Pancreas (tissue), 10 donors: ENCODE measurements at regions of chr19 and their contacts with region 1.

Region 1: DNA sequence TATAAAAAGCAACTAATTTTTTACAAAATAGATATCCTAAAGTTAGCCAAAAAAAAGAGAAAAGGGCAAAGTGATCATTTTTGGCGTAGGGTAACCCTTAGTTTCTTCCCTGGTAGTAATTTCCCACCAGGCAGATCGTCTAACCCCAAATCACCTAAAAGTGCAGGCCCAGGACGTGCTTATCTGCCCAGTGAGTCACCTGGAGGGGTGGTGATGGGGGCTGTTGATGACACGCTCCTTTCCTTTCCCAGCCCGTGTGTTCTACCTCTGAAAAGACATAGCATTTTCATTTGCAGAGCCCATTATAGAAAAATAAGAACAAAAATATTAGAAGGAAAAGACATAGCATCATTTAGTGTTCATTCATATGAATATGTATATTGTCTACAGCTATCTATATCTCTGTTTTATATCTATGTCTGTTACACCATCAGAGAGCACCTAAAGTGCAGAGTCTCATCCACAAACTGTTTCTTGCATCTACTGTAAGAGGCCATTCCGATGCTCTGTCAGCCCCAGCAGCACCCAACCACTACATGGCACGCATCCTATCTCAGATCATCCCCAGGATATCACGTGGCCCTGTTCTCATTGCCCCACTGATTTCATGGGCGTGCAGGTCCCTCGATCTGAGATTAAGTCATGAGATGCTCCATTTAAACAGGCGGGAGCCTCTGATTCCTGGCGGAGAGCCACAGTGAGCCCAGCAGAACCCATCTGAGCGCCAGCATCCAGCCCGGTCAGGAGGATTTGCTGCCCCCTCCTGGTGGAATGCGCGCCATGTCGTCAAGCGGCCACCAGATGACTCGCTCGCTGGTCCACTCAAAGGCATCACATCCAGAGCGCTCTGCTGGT is 8.5 kb upstream of the LILRB3 start:
- DNase-seq: peak; percentile 62 to 96 (median 94)
- ATAC-seq: peak; percentile 96 to 100 (median 99)
- H3K4me3 ChIP-seq: no peak overlapping the region
- H3K27ac ChIP-seq: no peak overlapping the region
- H3K4me1 ChIP-seq: no peaks in the 10 kb centered on the region
- H3K27me3 ChIP-seq: no peaks in the 10 kb centered on the region
- CTCF ChIP-seq: peak; percentile 86 to 99 (median 90)

Region 2: DNA sequence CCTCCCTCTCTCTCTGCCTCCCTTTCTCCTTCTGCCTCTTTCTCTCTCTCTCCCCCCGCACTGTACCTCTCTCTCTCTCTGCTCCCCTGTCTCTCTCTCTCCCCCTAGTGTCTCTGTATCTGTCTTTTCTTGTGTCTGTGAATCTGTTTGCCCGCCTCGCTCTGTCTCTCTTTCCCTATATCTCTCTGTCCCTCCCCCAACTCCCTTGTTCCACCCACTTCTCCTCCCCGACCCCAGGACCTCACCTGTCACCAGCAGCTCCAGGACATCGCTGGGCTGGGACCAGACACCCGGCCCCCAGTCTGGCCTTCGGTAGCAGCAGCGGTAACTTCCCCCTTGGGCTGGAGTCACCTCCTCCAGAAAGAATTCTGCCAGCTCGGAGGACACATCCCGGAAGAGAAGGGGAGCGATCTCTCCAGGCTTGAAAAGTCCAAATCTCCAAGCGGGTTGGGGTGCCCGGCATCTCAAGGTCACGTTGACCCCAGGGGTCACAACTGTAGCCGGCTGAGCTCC is 134.6 kb before region 1 on chr19:
- intact Hi-C with region 1: no loop called
- DNase-seq: no peak
- ATAC-seq: peak in 3 of 4 donors; percentile 24 to 48 (median 40)
- H3K4me3 ChIP-seq: peak overlapping the region in 1 of 4 donors; percentile 30
- H3K27ac ChIP-seq: peak overlapping the region in 1 of 4 donors; percentile 17
- H3K4me1 ChIP-seq: no peaks in the 10 kb centered on the region
- H3K27me3 ChIP-seq: peaks cover 0 to 4% (median 0%) of the 10 kb centered on the region in 4 donors
- CTCF ChIP-seq: no peak

Region 3: GRCh38 chr19:54109651-54110050 is 121.7 kb before region 1 on chr19:
- intact Hi-C with region 1: no loop called
- DNase-seq: no peak
- ATAC-seq: no peak
- H3K4me3 ChIP-seq: no peak overlapping the region
- H3K27ac ChIP-seq: no peak overlapping the region
- H3K4me1 ChIP-seq: peaks cover 4 to 6% (median 5%) of the 10 kb centered on the region in 3 donors
- H3K27me3 ChIP-seq: no peaks in the 10 kb centered on the region
- CTCF ChIP-seq: no peak

Region 4: GRCh38 chr19:54154603-54155357 is 76.5 kb before region 1 on chr19:
- intact Hi-C with region 1: no loop called
- DNase-seq: no peak
- ATAC-seq: no peak
- H3K4me3 ChIP-seq: no peak overlapping the region
- H3K27ac ChIP-seq: no peak overlapping the region
- H3K4me1 ChIP-seq: peaks cover 0 to 4% (median 4%) of the 10 kb centered on the region in 3 donors
- H3K27me3 ChIP-seq: no peaks in the 10 kb centered on the region
- CTCF ChIP-seq: no peak

Region 5: DNA sequence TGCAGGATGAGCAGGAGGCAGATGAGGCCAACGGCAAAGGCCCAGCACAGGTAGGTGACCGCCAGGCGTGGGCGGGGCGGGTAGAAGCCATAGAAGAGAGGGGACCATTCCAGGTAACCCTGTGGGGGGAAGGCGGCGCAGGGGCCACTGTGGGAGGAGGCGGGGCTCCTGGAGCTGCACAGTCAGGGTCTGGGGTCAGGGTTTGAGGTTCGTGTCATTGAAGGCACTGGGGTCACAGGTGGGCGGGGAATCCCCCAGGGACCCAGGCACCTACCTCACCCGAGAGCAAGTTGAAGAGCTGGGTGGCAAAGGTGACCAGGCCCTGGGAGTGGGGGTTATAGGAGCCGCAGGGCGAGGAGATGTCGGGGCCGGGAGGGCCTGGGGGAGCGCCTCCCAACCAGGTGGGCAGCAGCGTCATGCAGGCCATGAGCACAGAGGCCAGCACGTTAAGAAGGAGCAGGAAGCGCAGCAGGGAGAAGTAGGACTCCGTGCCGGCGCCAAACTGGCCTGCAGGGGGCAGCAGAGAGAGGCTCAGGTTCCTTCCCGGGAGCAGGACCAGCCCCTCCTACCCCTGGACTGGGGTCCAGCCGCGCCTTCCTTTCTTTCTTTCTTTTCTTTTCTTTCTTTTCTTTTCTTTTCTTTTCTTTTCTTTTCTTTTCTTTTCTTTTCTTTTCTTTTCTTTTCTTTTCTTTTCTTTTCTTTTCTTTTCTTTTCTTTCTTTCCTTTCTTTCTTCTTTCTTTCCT is 63.0 kb before region 1 on chr19:
- intact Hi-C with region 1: loop called in 2 of 3 experiments (anchors 2 to 10 kb)
- DNase-seq: peak; percentile 85 to 100 (median 93)
- ATAC-seq: peak; percentile 53 to 82 (median 70)
- H3K4me3 ChIP-seq: no peak overlapping the region
- H3K27ac ChIP-seq: no peak overlapping the region
- H3K4me1 ChIP-seq: peaks cover 0 to 2% (median 0%) of the 10 kb centered on the region in 3 donors
- H3K27me3 ChIP-seq: no peaks in the 10 kb centered on the region
- CTCF ChIP-seq: peak; percentile 85 to 97 (median 93)

Region 6: GRCh38 chr19:54179921-54180461 is 51.3 kb before region 1 on chr19:
- intact Hi-C with region 1: loop called in 1 of 3 experiments (anchors 10 kb)
- DNase-seq: peak in 1 of 6 donors; percentile 63
- ATAC-seq: peak; percentile 14 to 82 (median 64)
- H3K4me3 ChIP-seq: no peak overlapping the region
- H3K27ac ChIP-seq: no peak overlapping the region
- H3K4me1 ChIP-seq: no peaks in the 10 kb centered on the region
- H3K27me3 ChIP-seq: no peaks in the 10 kb centered on the region
- CTCF ChIP-seq: no peak